ENCODE measurements at regions of chr5 and their contacts with region 1.

Region 1: DNA sequence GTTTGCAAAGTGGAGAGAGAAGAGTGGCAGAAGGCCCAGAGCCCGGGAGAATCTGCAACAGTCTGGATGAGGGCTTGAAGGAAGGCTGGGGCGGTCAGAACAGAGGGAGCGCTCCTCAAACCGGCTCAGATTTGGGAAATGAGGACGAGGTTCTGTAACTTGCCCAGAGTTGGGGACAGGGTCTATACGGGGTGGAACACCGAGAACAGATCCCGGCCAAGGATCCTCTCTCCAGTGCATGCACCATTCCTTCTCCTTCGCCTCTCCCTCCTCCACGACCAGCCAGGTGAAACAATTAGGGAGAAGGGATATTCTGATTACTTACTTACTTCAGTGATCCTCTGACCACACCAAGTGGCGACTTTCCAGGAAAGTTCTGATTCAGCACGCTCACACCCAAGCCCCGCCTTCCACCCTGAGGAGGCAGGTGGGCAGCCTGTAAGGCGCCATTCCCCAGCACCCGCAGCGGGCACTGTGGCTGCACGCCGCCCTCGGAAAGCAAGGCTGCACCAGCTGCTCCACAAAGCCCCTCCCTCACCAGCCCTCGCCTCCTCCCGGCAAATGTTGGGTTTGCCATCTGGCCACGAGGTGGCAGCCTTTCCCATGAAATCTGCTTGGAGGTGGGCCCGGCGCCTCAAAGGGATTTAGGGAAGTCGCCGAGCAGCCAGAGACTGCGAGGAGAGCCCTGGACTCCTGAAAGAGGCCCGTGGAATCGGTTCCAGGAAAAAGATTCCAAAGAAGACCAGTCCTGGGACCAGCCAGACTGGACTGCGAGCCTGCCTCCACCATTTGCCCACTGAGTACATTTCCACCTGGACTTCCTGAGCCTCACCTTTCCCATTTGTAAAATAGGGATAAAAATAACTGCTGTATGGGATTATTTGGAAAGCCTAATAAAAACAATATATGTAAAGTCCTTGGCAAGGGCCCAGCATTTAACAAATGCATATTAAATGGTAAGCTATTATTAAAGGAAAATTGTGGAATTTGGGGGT is 22.2 kb upstream of the WWC1 start:
- DNase-seq: peak; percentile 51
- H3K4me3 Mint-ChIP-seq: no peak overlapping the region
- H3K27ac Mint-ChIP-seq: no peak overlapping the region
- H3K4me1 Mint-ChIP-seq: peaks cover 3% of the 10 kb centered on the region
- H3K27me3 Mint-ChIP-seq: peaks cover 20% of the 10 kb centered on the region

Region 2: DNA sequence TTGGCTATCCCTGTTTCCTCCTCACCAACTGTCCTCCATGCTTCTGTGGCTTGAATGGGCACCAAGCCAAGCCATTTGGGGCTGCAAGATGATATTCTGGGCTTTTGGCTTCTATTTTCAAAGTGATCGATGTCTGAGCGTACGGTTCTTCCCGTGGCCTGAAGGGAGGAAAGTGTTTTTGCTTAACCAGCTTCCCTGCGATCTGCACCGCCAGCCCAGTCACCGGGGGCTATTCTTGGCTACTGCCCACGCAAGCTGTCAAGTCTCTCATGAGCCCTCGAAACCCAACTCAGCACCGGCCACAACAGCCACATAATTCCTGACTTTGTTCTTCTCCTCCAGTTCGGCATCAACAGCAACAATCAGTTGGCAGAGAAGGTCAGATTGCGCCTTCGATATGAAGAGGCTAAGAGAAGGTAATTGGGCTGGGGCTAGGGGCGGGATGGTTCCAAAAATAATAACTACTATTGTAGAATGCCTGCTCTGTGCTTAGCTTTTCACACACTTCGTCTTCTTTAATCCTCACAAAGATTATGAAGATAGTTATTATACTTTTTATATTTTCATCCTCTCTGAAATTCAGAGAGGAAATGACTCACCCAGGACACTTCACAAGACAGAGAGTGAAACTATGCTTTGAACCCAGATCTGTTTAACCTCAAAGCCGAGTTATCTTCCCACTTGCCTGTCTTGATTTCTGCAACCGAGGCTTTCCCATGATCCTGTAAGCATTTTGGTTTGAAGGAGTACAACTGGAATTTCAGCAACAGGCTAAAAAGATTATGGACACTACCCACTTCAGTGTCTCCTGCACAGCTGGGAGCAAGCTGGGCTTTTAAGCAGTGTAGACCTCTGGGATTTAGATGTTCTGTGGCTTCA is 140.6 kb after region 1 on chr5:
- intact Hi-C with region 1: loop called (anchors 10 kb)
- DNase-seq: peak; percentile 10
- H3K4me3 Mint-ChIP-seq: peak overlapping the region; percentile 14
- H3K27ac Mint-ChIP-seq: no peak overlapping the region
- H3K4me1 Mint-ChIP-seq: peaks cover 22% of the 10 kb centered on the region
- H3K27me3 Mint-ChIP-seq: peaks cover 58% of the 10 kb centered on the region

Measured in activated T-helper 2 cell treated with anti-CD3 and anti-CD28 coated beads, Interferon-gamma antibody, Interleukin-2, Interleukin-4, amounts not matched to agents 10 μg/mL and 5 μg/mL and 100 μg/mL, durations not matched to agents 14 hours and 24 hours and 36 hours (primary cell).